GM18951 (cell line): ENCODE measurements at regions of chr3 and their contacts with region 1.

Region 1: DNA sequence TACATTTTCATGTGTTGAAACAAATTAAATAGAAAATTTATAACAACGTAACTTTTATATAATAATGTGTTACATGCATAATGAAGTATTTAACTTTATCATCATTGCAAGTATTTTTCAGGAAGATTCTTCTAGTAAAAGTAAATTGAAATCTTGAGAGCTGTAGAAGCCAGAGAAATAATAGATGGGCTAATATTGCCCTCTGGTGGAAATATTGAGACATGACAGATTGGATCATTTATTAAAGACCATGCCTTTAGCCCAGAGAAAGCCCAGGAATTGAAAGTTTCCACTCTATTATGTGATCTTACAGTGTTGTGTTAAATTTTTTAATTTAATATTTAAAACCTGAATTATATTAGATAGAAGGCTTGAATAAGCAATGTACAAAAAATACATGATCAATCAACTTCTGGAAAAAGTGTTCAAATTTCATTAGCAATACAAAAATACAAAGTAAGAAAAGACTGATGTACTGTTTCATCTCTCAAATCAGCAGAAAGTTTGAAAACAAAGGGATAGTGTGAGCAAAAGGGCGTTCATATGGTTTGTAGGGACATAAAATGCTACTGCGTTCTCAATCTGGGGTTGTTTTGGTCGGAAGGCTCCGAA is 52.7 kb upstream of the SPTSSB start:
- POLR2A ChIP-seq: no peak

Region 2: GRCh38 chr3:159458010-159458409 is 1966.0 kb before region 1 on chr3:
- in situ Hi-C with region 1: no loop called
- POLR2A ChIP-seq: no peak

Region 3: GRCh38 chr3:160956806-160957205 is 467.2 kb before region 1 on chr3:
- in situ Hi-C with region 1: loop called (anchors 10 kb)
- POLR2A ChIP-seq: no peak

Region 4: DNA sequence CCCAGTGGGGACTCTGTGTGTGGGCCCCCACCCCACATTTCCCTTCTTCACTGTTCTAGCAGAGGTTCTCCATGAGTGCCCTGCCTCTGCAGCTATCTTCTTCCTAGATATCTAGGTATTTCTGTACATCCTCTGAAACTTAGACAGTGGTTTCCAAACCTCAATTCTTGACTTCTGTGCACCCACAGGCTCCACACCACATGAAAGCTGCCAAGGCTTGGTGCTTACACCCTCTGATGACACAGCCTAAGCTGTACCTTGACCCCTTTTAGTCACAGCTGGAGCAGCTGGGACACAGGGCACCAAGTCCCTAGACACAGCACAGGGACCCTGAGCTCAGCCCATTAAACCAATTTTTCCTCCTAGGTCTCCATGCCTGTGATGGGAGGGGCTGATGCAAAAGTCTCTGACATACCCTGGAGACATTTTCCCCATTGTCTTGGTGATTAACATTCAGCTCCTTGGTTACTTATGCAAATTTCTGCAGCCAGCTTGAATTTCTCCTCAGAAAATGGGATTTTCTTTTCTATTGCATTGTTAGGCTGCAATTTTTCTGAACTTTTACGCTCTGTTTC is 377.1 kb after region 1 on chr3:
- in situ Hi-C with region 1: no loop called
- POLR2A ChIP-seq: no peak